Activated CD4-positive, alpha-beta memory T cell treated with anti-CD3 and anti-CD28 coated beads, Interleukin-2, amount 10 ng/mL, durations not matched to agents 7 days and 5 days (primary cell): ENCODE measurements at regions of chr15 and their contacts with region 1.

Region 1: DNA sequence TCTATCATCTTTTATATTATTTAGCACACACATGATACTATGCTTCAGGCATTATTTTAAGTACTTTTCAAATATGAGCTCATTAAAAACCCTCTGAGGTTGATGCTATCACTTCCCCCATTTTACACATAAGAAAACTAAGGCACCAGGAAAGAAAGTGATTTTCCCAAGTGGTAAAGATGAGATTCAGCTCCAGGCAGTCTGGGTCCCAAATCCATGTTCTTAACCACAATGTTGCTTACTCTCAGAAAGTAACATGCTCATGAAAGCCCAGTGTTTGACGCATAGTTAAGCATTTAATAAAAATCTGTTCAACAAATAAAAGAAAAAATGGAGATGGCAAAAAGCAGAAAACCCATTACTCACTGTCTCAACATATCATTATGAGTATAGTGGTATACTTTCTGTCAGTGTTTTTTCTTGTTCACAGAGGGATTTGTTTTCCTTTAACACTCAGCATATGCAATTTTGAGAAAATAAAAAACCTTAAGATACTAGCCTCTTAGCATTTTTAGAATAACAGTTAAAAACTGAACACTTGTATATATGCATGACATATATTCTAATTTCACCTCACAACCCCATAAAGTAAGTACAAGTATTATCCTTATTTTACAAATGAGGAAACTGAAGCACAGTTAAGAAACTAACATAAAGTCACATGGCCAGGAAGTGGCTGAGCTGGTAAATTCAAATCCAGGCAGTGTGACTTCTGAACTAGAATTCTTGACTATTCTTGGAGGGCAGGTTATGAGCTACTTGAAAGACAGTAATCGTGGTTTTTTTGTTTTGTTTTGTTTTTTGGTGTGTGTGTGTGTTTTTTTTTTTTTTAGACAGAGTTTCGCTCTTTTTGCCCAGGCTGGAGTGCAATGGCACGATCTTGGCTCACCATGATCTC is 10.4 kb downstream of the PEAK1 start:
- DNase-seq: peak; percentile 57
- H3K4me3 Mint-ChIP-seq: peak overlapping the region; percentile 67
- H3K27ac Mint-ChIP-seq: peak overlapping the region; percentile 88
- H3K4me1 Mint-ChIP-seq: peaks cover 32% of the 10 kb centered on the region
- H3K27me3 Mint-ChIP-seq: peaks cover 2% of the 10 kb centered on the region

Region 2: DNA sequence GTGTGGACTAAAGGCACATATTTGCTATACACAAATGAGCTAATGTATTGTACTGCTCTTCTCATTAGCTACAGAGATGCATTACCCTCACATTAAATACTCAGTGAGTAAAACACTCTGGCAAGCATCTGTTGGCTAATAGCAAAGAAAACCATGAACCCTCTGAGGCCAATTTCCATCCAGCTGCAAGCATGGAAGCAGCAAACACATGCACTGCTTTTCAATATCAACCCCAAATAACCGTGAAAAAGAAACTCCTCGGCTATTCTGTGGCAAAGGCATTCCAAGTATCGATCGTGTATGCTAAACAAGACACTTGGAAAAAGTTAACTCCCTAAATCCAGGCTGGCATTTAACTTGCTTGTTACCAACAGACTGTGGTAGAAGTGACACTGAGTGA is 56.6 kb before region 1 on chr15:
- CTCF ChIA-PET with region 1: no interaction called
- POLR2A ChIA-PET with region 1: no interaction called
- DNase-seq: no peak
- H3K4me3 Mint-ChIP-seq: no peak overlapping the region
- H3K27ac Mint-ChIP-seq: no peak overlapping the region
- H3K4me1 Mint-ChIP-seq: peaks cover 5% of the 10 kb centered on the region
- H3K27me3 Mint-ChIP-seq: no peaks in the 10 kb centered on the region

Region 3: DNA sequence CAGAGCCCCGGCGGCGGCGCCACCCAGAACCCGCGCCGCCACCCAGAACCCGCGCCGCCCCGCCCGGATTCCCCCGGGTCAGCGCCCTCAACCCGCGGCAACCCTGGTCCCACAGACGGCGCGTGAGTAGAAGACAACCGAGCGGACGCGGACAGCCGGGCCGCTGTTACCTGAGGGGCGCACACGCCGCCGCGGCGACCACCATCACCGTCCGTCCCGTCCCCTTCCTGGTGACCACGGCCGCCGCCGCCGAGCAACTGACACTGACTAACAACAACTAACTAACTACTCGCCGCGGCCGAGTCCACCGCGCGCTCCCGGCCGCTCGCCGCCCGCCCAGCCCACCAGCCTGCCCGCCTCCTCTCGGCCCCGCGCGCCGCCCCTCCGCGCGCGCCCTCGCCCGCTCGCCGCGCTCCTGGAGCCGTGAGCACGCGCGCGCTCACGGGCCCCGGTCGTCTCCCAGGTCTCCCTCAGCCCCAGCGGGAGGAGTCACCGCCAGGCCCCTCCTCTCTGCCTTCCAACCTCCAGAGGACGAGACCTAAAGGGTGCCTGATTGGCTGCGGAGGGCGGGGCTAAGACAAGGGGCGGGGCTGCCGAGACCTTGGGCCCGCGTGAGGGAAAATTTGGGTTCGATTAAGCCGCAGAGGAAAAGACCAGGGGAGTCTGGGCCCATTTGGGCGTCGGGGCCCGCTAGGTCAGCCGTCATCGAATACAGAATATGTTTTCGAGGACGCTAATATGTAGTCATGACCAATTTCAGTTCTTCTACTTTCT is 10.5 kb after region 1 on chr15 and contains the start of gene PEAK1:
- CTCF ChIA-PET with region 1: interaction called, 5 read pairs
- POLR2A ChIA-PET with region 1: interaction called, 22 read pairs
- DNase-seq: peak; percentile 100
- H3K4me3 Mint-ChIP-seq: peak within 1 kb of the TSS; percentile 97
- H3K27ac Mint-ChIP-seq: peak within 1 kb of the TSS; percentile 95
- H3K4me1 Mint-ChIP-seq: peaks cover 30% of the 10 kb centered on the region
- H3K27me3 Mint-ChIP-seq: peaks cover 12% of the 10 kb centered on the region
- total RNA-seq, gene PEAK1: 20.8 to 23.6 TPM

Region 4: GRCh38 chr15:77440378-77440999 is 31.0 kb after region 1 on chr15:
- CTCF ChIA-PET with region 1: no interaction called
- POLR2A ChIA-PET with region 1: no interaction called
- DNase-seq: no peak
- H3K4me3 Mint-ChIP-seq: no peak overlapping the region
- H3K27ac Mint-ChIP-seq: no peak overlapping the region
- H3K4me1 Mint-ChIP-seq: peaks cover 4% of the 10 kb centered on the region
- H3K27me3 Mint-ChIP-seq: no peaks in the 10 kb centered on the region